Dendritic cell treated with granulocyte-macrophage colony-stimulating factor and Interleukin-4, amounts not matched to agents 40 ng/mL and 50 ng/mL, for 4 days (primary cell): ENCODE measurements at regions of chr13 and their contacts with region 1.

Region 1: GRCh38 chr13:98672944-98673545 is 79.4 kb downstream of the SLC15A1 start:
- H3K4me3 Mint-ChIP-seq: no peak overlapping the region
- H3K27ac Mint-ChIP-seq: no peak overlapping the region
- H3K4me1 Mint-ChIP-seq: peaks cover 5% of the 10 kb centered on the region
- H3K27me3 Mint-ChIP-seq: peaks cover 26% of the 10 kb centered on the region

Region 2: DNA sequence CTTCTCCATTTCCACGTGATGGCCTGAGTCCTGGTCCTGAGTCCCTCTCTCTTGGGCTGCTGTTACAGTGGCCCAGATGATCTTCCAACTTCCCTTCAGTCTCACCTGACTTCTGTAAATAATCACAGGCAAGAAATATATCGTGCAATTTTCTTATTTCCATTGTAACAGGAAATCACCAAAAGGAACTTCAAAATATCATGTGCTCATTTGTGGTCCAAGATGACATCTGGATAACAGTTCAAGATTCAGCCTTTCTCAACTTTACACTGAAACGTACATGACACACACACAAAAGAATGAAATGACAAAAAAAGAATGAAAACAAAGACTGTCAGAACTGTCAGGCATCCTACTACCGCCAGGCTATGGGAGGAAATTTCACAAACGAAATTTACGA is 1261.1 kb before region 1 on chr13:
- intact Hi-C with region 1: no loop called
- H3K4me3 Mint-ChIP-seq: no peak overlapping the region
- H3K27ac Mint-ChIP-seq: no peak overlapping the region
- H3K4me1 Mint-ChIP-seq: peaks cover 5% of the 10 kb centered on the region
- H3K27me3 Mint-ChIP-seq: no peaks in the 10 kb centered on the region

Region 3: GRCh38 chr13:97855570-97856303 is 817.3 kb before region 1 on chr13:
- intact Hi-C with region 1: loop called (anchors 2 kb)
- H3K4me3 Mint-ChIP-seq: no peak overlapping the region
- H3K27ac Mint-ChIP-seq: no peak overlapping the region
- H3K4me1 Mint-ChIP-seq: peaks cover 12% of the 10 kb centered on the region
- H3K27me3 Mint-ChIP-seq: peaks cover 8% of the 10 kb centered on the region

Region 4: DNA sequence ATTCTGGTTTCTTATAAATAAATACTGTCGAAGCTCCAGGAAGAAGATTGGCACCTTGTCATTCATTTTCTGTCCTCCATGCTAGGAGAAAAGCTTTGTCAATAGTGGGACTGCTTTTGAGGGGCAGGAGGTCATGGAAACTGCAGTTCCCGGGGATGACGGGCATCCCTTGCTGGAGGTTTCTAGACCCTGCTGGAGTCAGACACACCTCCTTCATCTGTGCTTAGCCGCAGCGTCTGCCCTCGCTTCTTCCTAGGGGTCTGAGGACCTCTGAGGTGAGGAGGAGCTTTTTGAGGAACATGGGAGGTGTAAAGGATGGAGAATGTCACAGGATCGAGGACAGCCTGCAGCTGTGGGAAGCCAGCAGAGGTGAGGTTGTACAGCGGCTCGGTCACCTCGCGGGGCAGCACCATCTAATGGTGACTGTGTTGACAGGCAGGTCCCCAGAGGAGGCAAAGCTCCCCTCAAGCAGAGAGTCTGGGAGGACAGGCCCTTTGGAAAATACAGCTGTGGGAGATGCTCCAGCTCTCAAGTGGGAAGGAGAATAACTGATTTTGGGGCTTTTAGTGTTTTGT is 323.2 kb before region 1 on chr13:
- intact Hi-C with region 1: loop called (anchors 5 kb)
- H3K4me3 Mint-ChIP-seq: no peak overlapping the region
- H3K27ac Mint-ChIP-seq: no peak overlapping the region
- H3K4me1 Mint-ChIP-seq: no peaks in the 10 kb centered on the region
- H3K27me3 Mint-ChIP-seq: no peaks in the 10 kb centered on the region

Region 5: GRCh38 chr13:98445340-98446233 is 227.5 kb before region 1 on chr13:
- intact Hi-C with region 1: loop called (anchors 1 kb)
- H3K4me3 Mint-ChIP-seq: no peak overlapping the region
- H3K27ac Mint-ChIP-seq: no peak overlapping the region
- H3K4me1 Mint-ChIP-seq: peaks cover 19% of the 10 kb centered on the region
- H3K27me3 Mint-ChIP-seq: no peaks in the 10 kb centered on the region

Region 6: DNA sequence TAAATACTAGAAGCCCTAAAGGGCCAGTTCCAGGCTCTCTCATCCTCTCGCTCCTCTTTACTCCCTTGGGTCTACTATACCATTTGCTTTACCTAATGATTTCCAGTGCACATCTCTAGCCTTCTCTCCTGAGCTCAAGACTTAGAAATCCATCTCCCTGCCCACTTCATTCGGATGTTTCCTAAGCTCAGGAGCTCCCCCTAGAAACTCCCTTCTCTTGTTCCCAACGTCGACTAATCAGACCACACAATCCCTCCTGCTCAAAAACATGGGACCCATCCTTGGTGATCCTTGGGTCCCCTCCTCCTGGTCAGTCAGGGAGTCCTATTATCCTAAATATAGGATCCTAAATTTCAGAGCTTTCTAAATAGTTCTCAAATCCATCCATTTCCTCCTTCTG is 75.0 kb before region 1 on chr13:
- intact Hi-C with region 1: no loop called
- H3K4me3 Mint-ChIP-seq: no peak overlapping the region
- H3K27ac Mint-ChIP-seq: peak overlapping the region; percentile 18
- H3K4me1 Mint-ChIP-seq: peaks cover 30% of the 10 kb centered on the region
- H3K27me3 Mint-ChIP-seq: peaks cover 20% of the 10 kb centered on the region